CD4-positive, alpha-beta T cell (primary cell): ENCODE measurements at regions of chr19 and their contacts with region 1.

Region 1: DNA sequence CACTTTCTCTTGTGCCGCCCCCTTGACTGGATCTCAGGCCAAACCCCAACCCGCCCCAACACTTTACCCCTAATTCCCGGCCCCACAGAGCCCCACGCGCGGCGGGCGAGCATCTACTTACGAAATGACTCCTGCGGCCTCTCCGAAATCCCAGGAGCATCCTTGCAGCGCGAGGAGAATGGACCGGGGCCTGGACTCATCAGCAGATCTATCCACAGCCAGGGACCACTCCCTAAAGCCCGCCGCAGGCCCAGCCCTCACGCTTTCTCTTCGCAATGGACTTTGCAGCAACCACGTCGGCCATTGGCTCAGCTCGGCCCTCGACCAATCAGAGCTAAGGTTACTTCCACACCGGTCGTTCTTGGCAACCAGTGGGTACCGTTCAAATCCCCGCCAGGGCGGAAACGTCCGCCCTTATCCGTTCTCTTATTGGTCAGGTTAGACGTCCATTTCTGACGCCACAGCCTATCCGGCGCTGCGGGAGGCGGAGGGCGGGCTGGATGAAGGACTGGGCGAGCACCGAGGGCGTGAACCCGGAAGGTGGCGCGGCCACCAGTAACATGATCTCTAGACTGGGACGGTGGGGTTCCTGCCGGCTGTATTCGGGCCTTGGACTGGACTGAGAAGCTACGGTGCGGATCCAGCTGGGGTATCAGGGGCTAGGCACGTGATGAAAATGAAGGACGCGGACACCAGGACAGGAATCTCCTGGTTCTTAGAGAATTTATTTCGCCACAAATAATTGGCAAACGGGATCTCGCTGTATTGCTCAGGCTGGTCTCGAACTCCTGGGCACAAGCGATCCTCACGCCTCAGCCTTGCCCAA is at the starts of genes CEP89 and FAAP24:
- DNase-seq: peak; percentile 95 to 100 (median 98)
- ATAC-seq: peak; percentile 99
- H3K4me3 ChIP-seq: peak within 1 kb of the TSS; percentile 60
- H3K4me3 Mint-ChIP-seq: peak within 1 kb of the TSS; percentile 96
- H3K27ac ChIP-seq: peak within 1 kb of the TSS; percentile 55 to 76
- H3K27ac Mint-ChIP-seq: peak within 1 kb of the TSS; percentile 79
- H3K4me1 ChIP-seq: peaks cover 23% of the 10 kb centered on the region
- H3K4me1 Mint-ChIP-seq: peaks cover 22% of the 10 kb centered on the region
- H3K27me3 ChIP-seq: no peaks in the 10 kb centered on the region
- H3K27me3 Mint-ChIP-seq: no peaks in the 10 kb centered on the region
- CTCF ChIP-seq: no peak
- total RNA-seq, gene CEP89: 4.0 to 5.1 TPM
- total RNA-seq, gene FAAP24: 0.91 to 1.4 TPM

Region 2: DNA sequence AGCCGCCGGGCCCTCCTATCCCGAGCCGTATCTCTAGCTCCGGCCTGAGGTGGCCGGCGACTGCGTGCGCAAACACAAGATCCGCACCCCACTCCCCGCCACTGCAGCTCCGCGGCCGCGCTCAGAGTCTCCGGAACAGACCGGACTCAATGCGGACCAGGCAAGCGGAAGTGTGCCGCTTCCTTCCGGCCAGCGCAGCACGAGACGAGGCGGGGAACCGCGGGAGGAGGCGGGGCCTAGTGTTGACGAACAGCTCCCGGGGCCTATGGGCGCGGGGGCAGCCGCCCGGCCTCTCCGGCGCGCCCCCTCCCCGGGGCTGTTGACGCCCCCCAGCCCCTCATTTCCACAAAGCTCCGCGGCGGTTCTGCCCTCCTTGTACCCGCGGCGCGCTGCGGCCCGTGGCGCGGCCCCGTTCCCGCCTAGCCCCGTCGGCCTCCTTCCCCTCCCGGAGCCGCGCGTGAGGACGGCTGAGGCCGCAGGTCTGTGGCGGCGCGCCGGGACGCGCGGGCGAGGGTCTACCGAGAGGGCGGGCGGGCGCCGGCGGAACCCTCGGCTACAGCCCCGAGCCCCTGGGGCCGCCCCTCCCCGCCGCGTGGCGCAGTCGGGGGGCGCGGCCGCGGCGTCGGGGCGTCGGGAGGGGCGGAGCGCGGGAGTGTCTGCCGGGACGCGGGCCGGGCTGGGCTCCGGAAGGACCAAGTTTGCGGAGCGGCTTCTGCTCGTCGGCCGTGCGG is 566.3 kb before region 1 on chr19 and contains the start of gene DPY19L3:
- CTCF ChIA-PET with region 1: no interaction called
- POLR2A ChIA-PET with region 1: interaction called, 3 read pairs
- intact Hi-C with region 1: loop called in 1 of 2 experiments (anchors 5 kb)
- DNase-seq: peak; percentile 77 to 93 (median 85)
- ATAC-seq: peak; percentile 88
- H3K4me3 ChIP-seq: peak within 1 kb of the TSS; percentile 76
- H3K4me3 Mint-ChIP-seq: peak within 1 kb of the TSS; percentile 89
- H3K27ac ChIP-seq: peak within 1 kb of the TSS; percentile 72 to 80
- H3K27ac Mint-ChIP-seq: peak within 1 kb of the TSS; percentile 91
- H3K4me1 ChIP-seq: peaks cover 19% of the 10 kb centered on the region
- H3K4me1 Mint-ChIP-seq: peaks cover 30% of the 10 kb centered on the region
- H3K27me3 ChIP-seq: no peaks in the 10 kb centered on the region
- H3K27me3 Mint-ChIP-seq: no peaks in the 10 kb centered on the region
- CTCF ChIP-seq: no peak
- total RNA-seq, gene DPY19L3: 7.3 to 8.5 TPM

Region 3: GRCh38 chr19:32691291-32691951 is 280.5 kb before region 1 on chr19 and contains the start of gene NUDT19:
- CTCF ChIA-PET with region 1: no interaction called
- POLR2A ChIA-PET with region 1: interaction called, 3 read pairs
- intact Hi-C with region 1: loop called in 1 of 2 experiments (anchors 5 kb)
- DNase-seq: peak; percentile 50 to 86 (median 72)
- ATAC-seq: peak; percentile 77
- H3K4me3 ChIP-seq: peak within 1 kb of the TSS; percentile 65
- H3K4me3 Mint-ChIP-seq: peak within 1 kb of the TSS; percentile 96
- H3K27ac ChIP-seq: peak within 1 kb of the TSS; percentile 31 to 55
- H3K27ac Mint-ChIP-seq: peak within 1 kb of the TSS; percentile 80
- H3K4me1 ChIP-seq: peaks cover 44% of the 10 kb centered on the region
- H3K4me1 Mint-ChIP-seq: peaks cover 51% of the 10 kb centered on the region
- H3K27me3 ChIP-seq: no peaks in the 10 kb centered on the region
- H3K27me3 Mint-ChIP-seq: no peaks in the 10 kb centered on the region
- CTCF ChIP-seq: no peak
- total RNA-seq, gene NUDT19: 7.9 to 8.2 TPM

Region 4: DNA sequence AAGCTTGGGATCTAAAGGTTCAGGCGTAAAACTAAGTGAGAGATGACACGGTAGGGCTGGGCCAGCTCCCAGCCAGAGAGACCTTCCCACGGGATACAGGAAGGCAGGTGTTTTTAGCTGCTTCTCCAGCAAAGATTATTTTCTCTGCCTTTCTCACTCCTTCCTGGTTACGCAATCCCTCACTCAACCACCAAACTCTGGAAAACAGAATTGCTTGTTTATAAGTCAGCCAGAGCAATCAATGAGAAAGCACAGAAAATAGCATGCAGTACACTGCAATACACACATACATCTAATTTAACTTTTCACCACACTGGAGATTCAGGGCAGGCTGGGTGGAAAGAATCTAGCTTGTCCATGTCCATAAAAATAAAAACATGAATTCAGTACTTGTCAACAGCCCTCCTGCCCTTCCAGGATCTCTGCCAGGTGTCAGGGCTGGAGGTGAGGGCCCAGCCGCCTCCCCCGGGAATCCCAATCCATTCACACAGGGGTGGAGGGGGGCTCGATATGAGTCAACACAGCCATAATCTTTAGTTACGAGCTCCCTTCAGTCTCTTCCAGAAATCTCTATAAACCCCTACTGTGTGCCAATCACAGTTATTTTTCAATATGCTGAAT is 80.5 kb after region 1 on chr19:
- CTCF ChIA-PET with region 1: no interaction called
- POLR2A ChIA-PET with region 1: no interaction called
- intact Hi-C with region 1: no loop called
- DNase-seq: no peak
- ATAC-seq: no peak
- H3K4me3 ChIP-seq: no peak overlapping the region
- H3K4me3 Mint-ChIP-seq: no peak overlapping the region
- H3K27ac ChIP-seq: no peak overlapping the region
- H3K27ac Mint-ChIP-seq: no peak overlapping the region
- H3K4me1 ChIP-seq: no peaks in the 10 kb centered on the region
- H3K4me1 Mint-ChIP-seq: no peaks in the 10 kb centered on the region
- H3K27me3 ChIP-seq: no peaks in the 10 kb centered on the region
- H3K27me3 Mint-ChIP-seq: no peaks in the 10 kb centered on the region
- CTCF ChIP-seq: no peak

Region 5: DNA sequence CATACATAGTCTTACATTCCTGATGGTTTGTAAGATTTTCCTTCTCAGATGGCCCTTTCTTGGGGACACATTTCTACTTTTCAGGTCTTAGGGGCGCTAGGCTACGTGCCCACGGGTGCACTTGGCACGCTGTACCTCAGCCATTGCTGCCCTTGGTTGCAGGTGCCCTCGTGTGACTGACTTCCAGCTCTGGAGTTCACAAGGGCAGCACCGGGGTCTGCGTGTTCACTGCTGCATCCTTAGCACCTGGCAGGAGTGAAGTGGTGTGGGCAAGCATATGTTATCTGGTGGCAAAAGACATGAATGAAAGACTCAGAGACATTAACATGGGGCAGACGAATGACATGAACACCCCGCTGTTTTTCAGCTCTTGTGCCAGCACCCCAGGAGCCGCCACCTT is 146.7 kb after region 1 on chr19:
- CTCF ChIA-PET with region 1: no interaction called
- POLR2A ChIA-PET with region 1: no interaction called
- intact Hi-C with region 1: loop called (anchors 1 to 2 kb)
- DNase-seq: no peak
- ATAC-seq: no peak
- H3K4me3 ChIP-seq: no peak overlapping the region
- H3K4me3 Mint-ChIP-seq: no peak overlapping the region
- H3K27ac ChIP-seq: no peak overlapping the region
- H3K27ac Mint-ChIP-seq: no peak overlapping the region
- H3K4me1 ChIP-seq: no peaks in the 10 kb centered on the region
- H3K4me1 Mint-ChIP-seq: no peaks in the 10 kb centered on the region
- H3K27me3 ChIP-seq: no peaks in the 10 kb centered on the region
- H3K27me3 Mint-ChIP-seq: no peaks in the 10 kb centered on the region
- CTCF ChIP-seq: no peak

Region 6: DNA sequence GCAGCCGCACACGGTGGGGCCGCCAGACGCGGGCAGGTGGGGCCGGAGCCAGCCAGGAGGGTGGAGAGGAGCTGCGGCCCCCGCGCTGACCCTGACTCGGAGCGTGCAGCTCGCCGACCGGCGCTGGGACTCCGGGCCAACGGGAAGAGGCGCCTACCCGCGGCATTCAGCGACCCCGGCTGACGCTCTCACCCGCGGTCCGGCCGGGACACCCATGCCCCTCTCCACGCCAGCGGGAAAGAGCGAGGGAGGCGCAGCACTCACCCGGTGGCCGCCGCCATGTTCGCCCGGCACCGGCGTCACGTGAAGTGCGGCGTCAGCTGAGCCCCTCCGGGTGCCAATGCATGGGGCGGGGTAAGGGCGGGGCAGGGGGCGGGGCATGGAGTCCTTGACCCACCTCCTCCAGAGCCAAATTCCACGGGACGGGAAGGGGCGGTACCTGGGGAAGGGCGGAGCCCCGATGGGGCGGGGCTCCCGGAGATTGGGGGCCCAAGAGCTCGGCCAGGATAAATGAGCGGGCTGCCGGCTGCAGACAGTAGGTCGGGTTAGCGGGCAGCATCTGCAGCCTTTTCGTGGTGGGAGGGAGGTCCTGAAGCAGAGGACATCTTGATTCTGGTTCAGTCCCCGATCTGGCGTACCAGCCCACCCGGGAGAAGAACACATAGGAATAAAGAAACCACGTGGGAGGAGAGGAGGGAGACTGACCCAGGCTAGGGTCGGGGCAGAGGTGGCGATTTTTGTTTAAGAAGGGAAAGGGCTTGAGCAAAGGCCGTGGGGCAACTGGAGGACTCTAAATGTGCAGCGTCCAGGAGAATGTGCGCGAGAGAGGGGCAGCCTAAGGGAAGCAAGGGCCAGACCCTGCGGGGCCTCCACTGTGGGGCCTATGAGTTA is 549.8 kb after region 1 on chr19 and contains the start of gene PEPD:
- CTCF ChIA-PET with region 1: no interaction called
- POLR2A ChIA-PET with region 1: no interaction called
- intact Hi-C with region 1: loop called in 1 of 2 experiments (anchors 10 kb)
- DNase-seq: peak; percentile 51 to 97 (median 77)
- ATAC-seq: peak; percentile 90
- H3K4me3 ChIP-seq: peak within 1 kb of the TSS; percentile 73
- H3K4me3 Mint-ChIP-seq: peak within 1 kb of the TSS; percentile 77
- H3K27ac ChIP-seq: no peak within 1 kb of the TSS
- H3K27ac Mint-ChIP-seq: peak within 1 kb of the TSS; percentile 34
- H3K4me1 ChIP-seq: peaks cover 25% of the 10 kb centered on the region
- H3K4me1 Mint-ChIP-seq: peaks cover 31% of the 10 kb centered on the region
- H3K27me3 ChIP-seq: no peaks in the 10 kb centered on the region
- H3K27me3 Mint-ChIP-seq: no peaks in the 10 kb centered on the region
- CTCF ChIP-seq: no peak
- total RNA-seq, gene PEPD: 17.5 to 23.0 TPM